GM12878 (cell line): ENCODE measurements at regions of chr11 and their contacts with region 1.

Region 1: DNA sequence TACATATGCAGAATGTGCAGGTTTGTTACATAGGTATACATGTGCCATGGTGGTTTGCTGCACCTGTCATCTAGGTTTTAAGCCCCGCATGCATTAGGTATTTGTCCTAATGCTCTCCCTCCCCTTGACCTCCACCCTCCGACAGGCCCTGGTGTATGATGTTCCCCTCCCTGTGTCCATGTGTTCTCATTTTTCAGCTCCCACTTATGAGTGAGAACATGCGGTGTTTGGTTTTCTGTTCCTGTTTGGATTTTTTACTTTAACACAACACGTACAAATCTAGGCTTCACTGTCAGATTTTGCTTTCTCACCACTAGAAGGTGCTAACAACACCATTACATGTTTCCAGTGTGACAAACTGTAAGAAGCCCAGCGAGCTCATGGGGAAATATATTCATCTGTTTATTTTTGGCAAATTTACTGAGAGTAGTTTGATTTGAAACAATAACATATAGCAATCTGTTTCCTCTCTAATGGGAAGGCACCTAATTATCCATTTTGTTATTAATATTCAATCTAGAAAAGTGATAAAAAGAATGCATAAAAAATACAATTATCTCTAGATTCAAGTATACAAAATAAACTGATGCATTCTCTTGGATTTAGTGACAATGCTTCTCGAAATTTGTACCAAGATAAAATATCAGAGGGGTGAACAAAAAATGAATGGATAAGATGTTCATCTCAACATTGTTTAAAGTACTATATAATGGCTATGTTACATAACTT is 23.2 kb upstream of the BIRC3 start:
- DNase-seq: no peak
- ATAC-seq: peak; percentile 96
- H3K4me3 ChIP-seq: no peak overlapping the region
- H3K27ac ChIP-seq: 0 out of 2 replicates have a peak overlapping the region, but pooled peaks have one; percentile 8
- H3K4me1 ChIP-seq: peaks cover 12% of the 10 kb centered on the region
- H3K27me3 ChIP-seq: no peaks in the 10 kb centered on the region
- CTCF ChIP-seq: peak; percentile 77 to 81 (median 79)
- EP300 ChIP-seq: no peak
- POLR2A ChIP-seq: no peak
- RAD21 ChIP-seq: peak; percentile 84

Region 2: GRCh38 chr11:101775033-101775432 is 519.0 kb before region 1 on chr11:
- CTCF ChIA-PET with region 1: no interaction called
- POLR2A ChIA-PET with region 1: no interaction called
- RAD21 ChIA-PET with region 1: no interaction called
- SMC1A ChIA-PET with region 1: no interaction called
- in situ Hi-C with region 1: no loop called
- intact Hi-C with region 1: no loop called
- DNase-seq: no peak
- ATAC-seq: no peak
- H3K4me3 ChIP-seq: no peak overlapping the region
- H3K27ac ChIP-seq: no peak overlapping the region
- H3K4me1 ChIP-seq: no peaks in the 10 kb centered on the region
- H3K27me3 ChIP-seq: no peaks in the 10 kb centered on the region
- CTCF ChIP-seq: no peak
- EP300 ChIP-seq: no peak
- POLR2A ChIP-seq: no peak
- RAD21 ChIP-seq: no peak

Region 3: GRCh38 chr11:102268329-102269193 is 25.5 kb before region 1 on chr11:
- CTCF ChIA-PET with region 1: interaction called, 10 read pairs
- POLR2A ChIA-PET with region 1: no interaction called
- RAD21 ChIA-PET with region 1: interaction called, 5 read pairs
- SMC1A ChIA-PET with region 1: interaction called, 7 read pairs
- in situ Hi-C with region 1: no loop called
- intact Hi-C with region 1: no loop called
- DNase-seq: peak; percentile 17
- ATAC-seq: peak; percentile 98
- H3K4me3 ChIP-seq: peak overlapping the region; percentile 66
- H3K27ac ChIP-seq: no peak overlapping the region
- H3K4me1 ChIP-seq: no peaks in the 10 kb centered on the region; the same call in 1 of the 2 replicates
- H3K27me3 ChIP-seq: peaks cover 0 to 8% of the 10 kb centered on the region in 2 experiments; a peak in 2 of 4 replicates
- CTCF ChIP-seq: peak in 2 of 3 experiments; percentile 43 to 55; a peak in 4 of 6 replicates
- EP300 ChIP-seq: no peak
- POLR2A ChIP-seq: no peak
- RAD21 ChIP-seq: peak; percentile 30; the same call in 1 of the 2 replicates

Region 4: DNA sequence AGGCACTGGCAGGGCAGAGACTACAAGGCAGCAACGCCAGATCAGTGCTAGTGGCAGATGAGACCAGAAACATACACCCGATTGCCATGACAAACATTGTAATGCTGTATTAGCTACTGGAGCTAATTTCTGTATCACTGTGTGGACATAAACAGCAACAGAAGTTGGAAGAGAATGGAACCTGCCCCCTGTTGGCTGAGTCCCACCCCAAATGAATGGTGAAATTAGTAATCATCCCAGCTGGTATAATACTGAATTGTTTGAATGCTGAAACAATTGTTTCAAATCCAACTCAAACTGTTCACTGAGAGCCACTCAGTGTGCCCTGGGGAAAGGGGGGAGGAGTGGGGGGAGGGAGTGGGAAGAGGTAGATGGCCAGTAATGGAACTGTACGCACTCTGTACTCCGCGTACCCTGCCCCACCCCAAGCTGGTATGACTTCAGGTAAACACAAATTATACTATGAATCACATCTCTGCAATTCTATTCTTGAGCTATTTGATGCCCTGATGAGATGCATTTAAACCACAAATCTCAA is 12.1 kb after region 1 on chr11:
- CTCF ChIA-PET with region 1: interaction called, 219 read pairs
- POLR2A ChIA-PET with region 1: interaction called, 6 read pairs
- RAD21 ChIA-PET with region 1: interaction called, 17 read pairs
- SMC1A ChIA-PET with region 1: interaction called, 255 read pairs
- in situ Hi-C with region 1: no loop called
- intact Hi-C with region 1: no loop called
- DNase-seq: no peak
- ATAC-seq: peak; percentile 50
- H3K4me3 ChIP-seq: no peak overlapping the region
- H3K27ac ChIP-seq: no peak overlapping the region
- H3K4me1 ChIP-seq: peaks cover 9% of the 10 kb centered on the region
- H3K27me3 ChIP-seq: no peaks in the 10 kb centered on the region
- CTCF ChIP-seq: 0 out of 6 replicates have a peak, but pooled peaks of 1 of the 3 experiments have one; percentile 6
- EP300 ChIP-seq: no peak
- POLR2A ChIP-seq: no peak
- RAD21 ChIP-seq: no peak

Region 5: DNA sequence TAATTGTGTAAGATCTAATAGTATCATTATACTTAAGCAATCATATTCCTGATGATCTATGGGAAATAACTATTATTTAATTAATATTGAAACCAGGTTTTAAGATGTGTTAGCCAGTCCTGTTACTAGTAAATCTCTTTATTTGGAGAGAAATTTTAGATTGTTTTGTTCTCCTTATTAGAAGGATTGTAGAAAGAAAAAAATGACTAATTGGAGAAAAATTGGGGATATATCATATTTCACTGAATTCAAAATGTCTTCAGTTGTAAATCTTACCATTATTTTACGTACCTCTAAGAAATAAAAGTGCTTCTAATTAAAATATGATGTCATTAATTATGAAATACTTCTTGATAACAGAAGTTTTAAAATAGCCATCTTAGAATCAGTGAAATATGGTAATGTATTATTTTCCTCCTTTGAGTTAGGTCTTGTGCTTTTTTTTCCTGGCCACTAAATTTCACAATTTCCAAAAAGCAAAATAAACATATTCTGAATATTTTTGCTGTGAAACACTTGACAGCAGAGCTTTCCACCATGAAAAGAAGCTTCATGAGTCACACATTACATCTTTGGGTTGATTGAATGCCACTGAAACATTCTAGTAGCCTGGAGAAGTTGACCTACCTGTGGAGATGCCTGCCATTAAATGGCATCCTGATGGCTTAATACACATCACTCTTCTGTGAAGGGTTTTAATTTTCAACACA is 29.7 kb after region 1 on chr11:
- CTCF ChIA-PET with region 1: interaction called, 86 read pairs
- POLR2A ChIA-PET with region 1: interaction called, 10 read pairs
- RAD21 ChIA-PET with region 1: interaction called, 61 read pairs
- SMC1A ChIA-PET with region 1: interaction called, 255 read pairs
- in situ Hi-C with region 1: no loop called
- intact Hi-C with region 1: no loop called
- DNase-seq: no peak
- ATAC-seq: no peak
- H3K4me3 ChIP-seq: peak overlapping the region; percentile 49; the same call in 1 of the 2 replicates
- H3K27ac ChIP-seq: no peak overlapping the region
- H3K4me1 ChIP-seq: no peaks in the 10 kb centered on the region
- H3K27me3 ChIP-seq: no peaks in the 10 kb centered on the region
- CTCF ChIP-seq: no peak
- EP300 ChIP-seq: no peak
- POLR2A ChIP-seq: no peak
- RAD21 ChIP-seq: no peak

Region 6: GRCh38 chr11:102367364-102367763 is 73.3 kb after region 1 on chr11:
- CTCF ChIA-PET with region 1: interaction called, 5 read pairs
- POLR2A ChIA-PET with region 1: no interaction called
- RAD21 ChIA-PET with region 1: interaction called, 6 read pairs
- SMC1A ChIA-PET with region 1: interaction called, 25 read pairs
- in situ Hi-C with region 1: no loop called
- intact Hi-C with region 1: no loop called
- DNase-seq: no peak
- ATAC-seq: peak; percentile 58
- H3K4me3 ChIP-seq: no peak overlapping the region
- H3K27ac ChIP-seq: no peak overlapping the region
- H3K4me1 ChIP-seq: peaks cover 11% of the 10 kb centered on the region; the same call in 1 of the 2 replicates
- H3K27me3 ChIP-seq: no peaks in the 10 kb centered on the region
- CTCF ChIP-seq: peak; percentile 2 to 25 (median 17); a peak in 2 of 6 replicates
- EP300 ChIP-seq: no peak
- POLR2A ChIP-seq: no peak
- RAD21 ChIP-seq: peak; percentile 40; the same call in 1 of the 2 replicates